ENCODE measurements at regions of chr16 and their contacts with region 1.

Region 1: DNA sequence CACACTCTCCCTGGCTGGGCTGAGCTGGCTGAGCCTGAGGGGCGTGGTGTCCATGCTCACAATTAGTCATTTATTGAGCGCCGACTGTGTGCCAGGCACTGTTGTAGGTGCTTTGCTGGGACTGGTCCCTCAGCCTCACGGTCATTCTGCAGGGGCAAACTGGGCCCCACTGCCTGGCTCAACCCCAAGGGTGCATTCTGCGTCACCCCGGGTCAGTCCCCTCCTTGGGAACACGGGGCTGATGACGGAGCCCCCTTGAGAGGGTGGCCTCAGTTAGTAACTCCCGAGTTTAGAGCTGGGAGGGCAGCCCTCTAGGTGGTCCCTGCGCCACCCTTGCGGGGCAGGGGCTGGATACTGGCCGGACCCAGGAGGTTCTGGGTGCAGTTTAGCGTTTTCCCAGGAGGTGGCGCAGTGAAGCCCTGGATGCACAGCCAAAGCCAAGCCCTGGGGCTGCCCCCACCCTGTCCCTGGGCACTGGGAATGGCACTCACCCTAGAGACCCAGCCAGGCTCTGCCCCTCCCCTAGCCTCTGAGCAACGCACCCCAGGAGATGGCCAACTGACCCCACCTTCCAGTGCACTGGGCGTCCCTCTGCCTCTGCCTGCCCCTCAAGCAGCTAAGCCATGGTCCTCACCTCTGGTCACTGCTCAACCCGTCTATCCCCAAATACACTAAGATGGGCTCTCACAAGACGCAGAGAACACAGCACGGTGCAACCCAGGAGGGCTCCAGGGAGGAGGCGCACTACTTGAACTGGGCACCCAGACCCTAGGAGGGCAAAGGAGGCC is 243.2 kb upstream of the GSE1 start:
- DNase-seq: peak in 1 of 2 donors; percentile 87
- H3K4me3 ChIP-seq: peak overlapping the region in 1 of 2 donors; percentile 51
- H3K27ac ChIP-seq: peak overlapping the region; percentile 82 to 87
- H3K4me1 ChIP-seq: peaks cover 20 to 39% of the 10 kb centered on the region in 2 donors
- H3K27me3 ChIP-seq: no peaks in the 10 kb centered on the region
- CTCF ChIP-seq: peak; percentile 83 to 89 (median 84)

Region 2: DNA sequence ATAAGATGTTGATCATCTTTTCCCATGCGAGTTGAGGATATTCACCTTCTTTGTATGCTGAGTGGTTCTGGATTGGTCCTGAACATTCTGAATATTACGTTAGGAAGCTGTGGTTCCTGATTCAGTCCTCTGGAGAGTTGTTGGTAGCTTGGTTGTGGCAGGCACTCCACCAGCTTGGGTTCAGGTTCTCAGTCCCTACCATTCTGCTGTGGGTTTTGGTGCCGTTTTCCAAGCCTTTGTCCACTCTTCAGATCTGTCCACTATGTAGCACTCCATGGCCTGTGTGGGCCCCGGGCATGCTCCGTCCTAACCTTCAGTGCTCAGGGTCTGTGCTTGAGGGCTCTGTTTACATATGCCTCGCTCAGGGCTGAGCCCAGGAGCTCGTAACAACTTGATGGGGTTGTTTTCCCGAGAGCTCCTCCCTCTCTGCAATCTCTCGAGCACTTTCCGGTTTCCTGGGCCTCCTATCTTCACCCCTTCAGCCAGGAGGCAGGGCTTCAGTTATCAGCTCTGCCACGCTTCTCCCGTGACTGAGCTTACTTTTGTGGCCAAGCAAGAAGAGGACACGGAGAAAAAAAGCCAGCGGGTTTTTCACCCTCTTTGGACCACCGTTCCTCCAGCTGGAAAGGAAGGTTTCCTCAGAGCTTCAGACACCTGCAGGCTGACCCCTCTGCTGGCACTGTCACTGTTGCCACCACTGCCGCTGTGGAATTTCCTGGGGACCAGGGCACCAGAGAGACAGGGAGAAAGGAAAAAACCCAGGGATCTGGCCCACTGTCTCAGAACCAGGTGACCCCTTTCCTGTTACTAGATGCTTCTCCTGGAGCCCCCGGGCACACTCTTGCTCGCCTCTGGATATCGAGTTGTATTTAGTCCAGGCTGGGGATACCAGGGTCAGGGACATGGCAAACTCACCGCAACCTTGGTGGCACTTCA is 322.7 kb before region 1 on chr16:
- intact Hi-C with region 1: no loop called
- DNase-seq: no peak
- H3K4me3 ChIP-seq: no peak overlapping the region
- H3K27ac ChIP-seq: no peak overlapping the region
- H3K4me1 ChIP-seq: peaks cover 0 to 3% of the 10 kb centered on the region in 2 donors
- H3K27me3 ChIP-seq: no peaks in the 10 kb centered on the region
- CTCF ChIP-seq: no peak

Region 3: GRCh38 chr16:85126705-85127419 is 243.1 kb before region 1 on chr16:
- intact Hi-C with region 1: loop called (anchors 5 kb)
- DNase-seq: peak in 1 of 2 donors; percentile 90
- H3K4me3 ChIP-seq: peak overlapping the region in 1 of 2 donors; percentile 9
- H3K27ac ChIP-seq: peak overlapping the region; percentile 88 to 94
- H3K4me1 ChIP-seq: peaks cover 19 to 57% of the 10 kb centered on the region in 2 donors
- H3K27me3 ChIP-seq: no peaks in the 10 kb centered on the region
- CTCF ChIP-seq: no peak

Region 4: GRCh38 chr16:85321509-85322271 is 48.2 kb before region 1 on chr16:
- intact Hi-C with region 1: loop called (anchors 1 kb)
- DNase-seq: peak; percentile 91 to 99
- H3K4me3 ChIP-seq: peak overlapping the region in 1 of 2 donors; percentile 16
- H3K27ac ChIP-seq: peak overlapping the region; percentile 89 to 92
- H3K4me1 ChIP-seq: peaks cover 21 to 42% of the 10 kb centered on the region in 2 donors
- H3K27me3 ChIP-seq: no peaks in the 10 kb centered on the region
- CTCF ChIP-seq: no peak

Region 5: GRCh38 chr16:85349365-85350148 is 20.4 kb before region 1 on chr16:
- intact Hi-C with region 1: loop called (anchors 2 kb)
- DNase-seq: no peak
- H3K4me3 ChIP-seq: no peak overlapping the region
- H3K27ac ChIP-seq: no peak overlapping the region
- H3K4me1 ChIP-seq: peaks cover 2 to 7% of the 10 kb centered on the region in 2 donors
- H3K27me3 ChIP-seq: no peaks in the 10 kb centered on the region
- CTCF ChIP-seq: no peak

Region 6: DNA sequence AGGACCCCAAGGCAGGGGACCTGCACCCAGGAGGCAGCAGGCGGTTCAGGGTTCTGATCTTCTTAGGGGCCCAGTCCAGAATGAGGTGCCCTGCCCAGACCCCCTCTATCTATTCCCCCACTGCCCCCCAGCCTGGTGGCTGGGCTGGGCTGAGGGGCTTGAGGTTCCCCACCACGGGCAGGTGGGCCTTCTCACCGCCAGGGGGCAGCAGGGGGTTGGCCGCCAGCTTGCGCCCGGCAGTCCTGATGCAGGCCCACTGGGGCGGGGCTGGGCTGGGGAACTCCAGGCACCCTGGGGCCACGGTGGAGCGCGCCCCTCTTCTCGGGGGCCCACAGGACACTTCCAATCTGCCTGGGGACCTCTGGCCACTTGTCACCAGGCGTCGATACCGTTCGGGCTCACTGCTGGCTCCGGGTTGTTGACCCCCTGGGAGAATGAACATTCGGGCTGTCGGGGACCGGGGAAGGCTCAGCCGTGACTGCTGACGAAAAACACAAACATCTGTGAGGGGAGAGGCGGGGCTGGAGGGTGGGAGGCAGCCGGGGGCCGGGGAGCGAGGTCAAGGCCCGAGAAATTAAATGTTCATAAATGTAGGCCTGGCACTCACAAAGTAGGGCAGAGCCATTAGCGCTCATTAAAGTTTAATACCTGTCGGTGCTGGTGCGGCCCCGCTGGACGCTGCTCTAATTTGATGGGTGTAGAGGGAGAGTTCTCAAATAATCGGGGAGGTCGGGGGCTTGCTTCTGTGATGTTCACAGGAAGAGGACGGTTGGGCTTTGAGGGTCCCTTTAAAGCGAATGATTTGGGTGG is 23.9 kb after region 1 on chr16:
- intact Hi-C with region 1: loop called (anchors 1 kb)
- DNase-seq: peak in 1 of 2 donors; percentile 67
- H3K4me3 ChIP-seq: no peak overlapping the region
- H3K27ac ChIP-seq: peak overlapping the region in 1 of 2 donors; percentile 9
- H3K4me1 ChIP-seq: peaks cover 17 to 26% of the 10 kb centered on the region in 2 donors
- H3K27me3 ChIP-seq: no peaks in the 10 kb centered on the region
- CTCF ChIP-seq: peak; percentile 63 to 69 (median 67)

Region 7: DNA sequence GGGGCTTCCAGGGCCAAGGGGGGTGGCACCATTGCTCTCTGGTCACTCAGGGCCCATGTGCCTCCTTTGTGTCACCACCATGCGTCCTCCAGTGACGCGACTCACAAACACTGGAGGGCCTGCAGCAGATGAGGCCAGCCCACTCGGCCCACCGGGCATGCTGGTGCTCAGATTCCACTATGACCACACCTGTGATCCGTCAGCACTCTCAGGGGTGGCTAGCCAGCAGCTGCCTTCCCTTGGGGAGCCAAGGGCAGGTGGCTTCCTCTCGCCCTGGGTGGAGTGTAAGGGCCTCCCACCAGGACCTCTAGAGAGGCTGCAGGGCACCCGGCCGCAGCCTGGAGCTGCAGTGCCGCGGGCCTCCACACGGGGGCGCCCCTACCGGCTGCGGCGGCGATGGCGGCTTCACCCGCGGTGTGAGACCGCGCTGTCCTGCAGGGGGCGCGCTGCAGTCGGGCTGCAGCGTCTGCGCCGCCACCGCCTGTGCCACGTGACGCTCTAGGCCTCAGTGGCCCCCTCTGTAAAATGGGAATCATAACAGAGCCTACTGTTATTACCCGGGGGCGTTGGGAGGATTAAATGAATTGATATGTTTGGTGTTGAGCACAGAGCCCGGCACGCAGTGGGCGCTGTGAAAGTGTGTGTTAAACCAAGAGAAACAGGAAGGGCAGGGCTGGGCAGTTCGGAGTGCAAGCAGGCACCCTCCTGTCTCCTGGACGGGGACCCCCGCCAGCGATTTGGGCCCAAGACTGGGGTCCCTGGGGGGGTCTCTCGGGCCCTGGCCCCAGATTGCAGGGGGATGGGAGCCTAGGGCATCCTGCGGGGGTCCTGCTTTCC is 50.8 kb after region 1 on chr16:
- intact Hi-C with region 1: loop called (anchors 2 kb)
- DNase-seq: no peak
- H3K4me3 ChIP-seq: no peak overlapping the region
- H3K27ac ChIP-seq: no peak overlapping the region
- H3K4me1 ChIP-seq: peaks cover 0 to 3% of the 10 kb centered on the region in 2 donors
- H3K27me3 ChIP-seq: no peaks in the 10 kb centered on the region
- CTCF ChIP-seq: peak; percentile 99 to 100 (median 100)

Region 8: DNA sequence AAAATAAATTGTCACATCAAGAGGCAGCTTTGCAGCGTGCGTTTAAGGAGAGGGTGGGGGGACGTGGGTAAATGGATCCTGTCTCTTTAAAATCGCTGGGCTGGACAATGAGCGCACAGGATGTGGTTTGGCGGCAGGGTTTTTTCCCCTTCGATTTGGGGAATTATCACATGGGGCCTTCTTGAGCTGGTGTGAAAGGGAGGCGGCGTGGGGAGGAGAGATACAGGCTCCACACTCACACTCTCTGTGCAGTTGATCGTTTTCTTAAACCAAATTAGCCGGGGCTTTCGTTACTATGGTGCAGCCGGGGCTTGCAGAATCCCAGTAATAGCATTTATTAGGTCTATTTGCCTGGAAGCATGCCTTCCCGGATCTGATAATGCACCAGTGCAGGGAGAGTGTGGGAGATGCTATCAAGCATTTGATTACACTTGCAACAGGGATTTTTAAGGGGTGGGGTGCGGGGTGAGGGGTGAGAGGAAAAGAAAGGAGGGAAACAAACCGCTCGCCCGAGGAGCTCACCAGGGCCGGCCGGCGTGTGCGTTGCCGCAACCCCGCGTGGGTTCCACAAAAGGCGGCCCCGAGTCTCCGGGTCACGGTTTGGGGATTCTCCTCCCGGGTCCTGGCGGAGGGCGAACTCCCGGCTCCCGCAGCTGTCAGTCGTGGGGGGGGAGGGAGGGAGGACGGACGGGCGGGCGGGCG is 184.3 kb after region 1 on chr16:
- intact Hi-C with region 1: loop called (anchors 5 kb)
- DNase-seq: peak; percentile 54 to 86
- H3K4me3 ChIP-seq: peak overlapping the region; percentile 76 to 96
- H3K27ac ChIP-seq: peak overlapping the region; percentile 72 to 89
- H3K4me1 ChIP-seq: peaks cover 0 to 16% of the 10 kb centered on the region in 2 donors
- H3K27me3 ChIP-seq: no peaks in the 10 kb centered on the region
- CTCF ChIP-seq: no peak

Measured in ascending aorta (tissue), 2 donors.